WTC11 (cell line): ENCODE measurements at regions of chr16 and their contacts with region 1.

Region 1: DNA sequence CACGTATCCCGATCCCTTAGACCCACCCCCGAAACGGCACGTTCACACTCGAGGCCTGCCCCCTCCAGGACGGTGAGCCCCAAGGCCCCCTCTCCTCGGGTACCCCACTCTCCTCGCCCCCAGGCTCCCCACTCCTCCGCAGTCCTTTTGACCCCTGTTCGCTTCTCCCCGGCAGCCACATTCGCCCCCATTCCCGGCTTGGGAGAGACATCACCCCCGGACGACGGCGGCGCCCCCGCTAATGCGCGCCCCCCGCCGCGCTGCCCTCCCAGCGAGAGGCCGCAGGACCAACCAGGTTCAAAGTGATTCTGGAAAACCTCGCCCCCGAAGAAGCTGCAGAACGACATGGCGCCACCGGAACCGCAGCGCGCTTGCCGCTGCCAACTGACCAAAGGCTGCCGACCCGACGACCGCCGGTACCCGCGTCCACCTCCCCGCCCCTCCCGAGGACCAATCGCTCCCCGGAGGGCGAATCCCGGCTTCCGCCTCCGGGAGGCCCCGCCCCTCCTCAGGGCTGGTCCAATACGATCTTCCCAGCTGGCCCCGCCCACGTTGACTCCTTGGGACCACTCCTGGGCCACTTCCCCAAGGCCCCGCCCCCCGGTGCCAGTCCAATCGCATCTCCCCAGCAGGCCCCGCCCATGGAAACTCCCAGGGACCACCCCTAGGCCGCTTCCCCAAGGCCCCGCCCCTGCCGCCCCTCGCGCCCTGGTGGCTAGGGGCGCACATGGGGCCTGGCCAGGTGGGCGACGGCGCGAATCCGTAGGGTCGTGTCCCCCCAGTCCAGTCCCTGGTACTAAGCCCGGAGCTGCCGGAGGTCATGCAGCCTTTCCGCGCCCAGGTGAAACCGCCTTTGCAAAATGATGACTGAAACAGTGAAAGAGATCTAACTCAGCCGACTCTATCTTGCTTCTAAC is at the start of gene MSRB1:
- DNase-seq: peak; percentile 100
- ATAC-seq: peak; percentile 97
- H3K4me3 Mint-ChIP-seq: peak within 1 kb of the TSS; percentile 87
- H3K27ac Mint-ChIP-seq: peak within 1 kb of the TSS; percentile 60
- H3K4me1 Mint-ChIP-seq: peaks cover 22% of the 10 kb centered on the region
- H3K27me3 Mint-ChIP-seq: peaks cover 16% of the 10 kb centered on the region
- CTCF ChIP-seq: no peak
- total RNA-seq, gene MSRB1: 26.4 to 29.8 TPM (median 28.3 TPM) in 3 replicates

Region 2: DNA sequence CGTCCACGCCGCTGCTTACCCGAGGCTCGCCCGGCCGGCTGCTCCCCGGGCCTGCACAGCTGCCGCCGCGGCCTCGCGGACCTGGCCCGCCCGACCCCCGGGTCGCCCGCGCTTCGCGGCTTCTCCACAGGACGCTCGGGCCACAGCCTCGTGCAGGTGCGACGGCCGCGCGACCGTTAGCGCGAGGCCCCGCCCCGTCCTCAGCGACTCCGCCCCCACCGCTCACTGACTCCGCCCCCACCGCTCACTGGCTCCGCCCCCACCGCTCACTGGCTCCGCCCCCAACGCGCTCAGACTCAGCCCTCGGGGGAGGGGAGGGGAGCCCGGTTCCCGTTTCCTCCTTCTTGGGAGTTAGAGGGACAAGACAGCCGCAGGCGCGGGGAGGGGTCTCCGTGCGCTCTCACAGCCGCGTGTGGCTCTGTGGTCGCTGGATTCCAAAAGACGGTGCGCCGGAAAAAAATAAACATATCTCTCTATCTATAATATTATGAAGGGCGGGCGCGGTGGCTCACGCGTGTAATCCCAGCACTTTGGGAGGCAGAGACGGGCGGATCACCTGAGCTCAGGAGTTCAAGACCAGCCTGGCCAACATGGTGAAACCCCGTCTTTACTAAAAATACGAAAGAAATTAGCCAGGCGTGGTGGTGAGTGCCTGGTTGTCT is 71.0 kb before region 1 on chr16 and contains the start of gene MEIOB:
- CTCF ChIA-PET with region 1: interaction called, 10 read pairs
- POLR2A ChIA-PET with region 1: interaction called, 7 read pairs
- DNase-seq: peak; percentile 88
- ATAC-seq: peak; percentile 99
- H3K4me3 Mint-ChIP-seq: peak within 1 kb of the TSS; percentile 85
- H3K27ac Mint-ChIP-seq: no peak within 1 kb of the TSS
- H3K4me1 Mint-ChIP-seq: no peaks in the 10 kb centered on the region; the same call in 1 of the 2 replicates
- H3K27me3 Mint-ChIP-seq: peaks cover 35% of the 10 kb centered on the region
- CTCF ChIP-seq: no peak
- total RNA-seq, gene MEIOB: 1.4 to 3.9 TPM (median 3.3 TPM) in 3 replicates

Region 3: GRCh38 chr16:1964506-1965395 is 21.7 kb after region 1 on chr16 and contains the start of gene RPS2:
- CTCF ChIA-PET with region 1: interaction called, 6 read pairs
- POLR2A ChIA-PET with region 1: interaction called, 19 read pairs
- DNase-seq: peak; percentile 99
- ATAC-seq: peak; percentile 51
- H3K4me3 Mint-ChIP-seq: peak within 1 kb of the TSS; percentile 94
- H3K27ac Mint-ChIP-seq: peak within 1 kb of the TSS; percentile 97
- H3K4me1 Mint-ChIP-seq: peaks cover 39% of the 10 kb centered on the region
- H3K27me3 Mint-ChIP-seq: no peaks in the 10 kb centered on the region
- CTCF ChIP-seq: no peak
- total RNA-seq, gene RPS2: 4,395 to 4,767 TPM (median 4,632 TPM) in 3 replicates

Region 4: DNA sequence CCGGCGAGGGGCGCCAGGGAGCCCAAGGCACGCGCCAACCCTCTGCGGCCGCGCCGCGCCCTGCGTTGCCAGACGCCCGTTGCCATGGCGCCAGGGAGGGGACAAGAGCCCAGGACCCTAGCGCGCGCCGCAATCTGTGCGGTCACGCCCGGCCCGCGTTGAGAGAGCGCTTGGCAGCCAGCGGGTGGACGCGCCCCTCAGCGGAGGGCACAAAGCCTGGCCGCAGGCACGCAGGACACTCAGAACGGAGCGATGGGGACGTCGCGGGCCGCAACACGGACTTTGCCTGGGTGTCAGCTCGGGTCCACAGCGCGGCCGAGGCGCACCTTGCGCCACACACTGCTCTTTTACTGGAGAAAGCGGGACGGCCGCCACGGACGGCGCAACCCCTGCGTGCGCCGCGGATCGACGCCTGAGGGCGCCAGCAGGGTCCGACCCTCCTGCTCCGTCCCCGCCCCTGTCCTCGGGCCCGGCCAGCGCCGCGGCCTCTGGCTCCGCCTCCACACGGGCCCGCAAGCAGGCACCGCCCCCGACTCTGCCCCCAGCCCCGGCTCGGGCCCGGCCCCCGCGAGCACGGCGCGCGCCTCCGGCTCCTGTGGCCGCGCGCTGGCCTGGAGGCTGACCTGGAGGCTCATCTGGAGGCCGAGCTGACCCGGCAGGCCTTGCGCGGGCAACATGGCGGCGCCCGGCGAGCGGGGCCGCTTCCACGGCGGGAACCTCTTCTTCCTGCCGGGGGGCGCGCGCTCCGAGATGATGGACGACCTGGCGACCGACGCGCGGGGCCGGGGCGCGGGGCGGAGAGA is 40.7 kb after region 1 on chr16 and contains the start of gene GFER:
- CTCF ChIA-PET with region 1: interaction called, 10 read pairs
- POLR2A ChIA-PET with region 1: interaction called, 5 read pairs
- DNase-seq: peak; percentile 95
- ATAC-seq: peak; percentile 78
- H3K4me3 Mint-ChIP-seq: peak within 1 kb of the TSS; percentile 81
- H3K27ac Mint-ChIP-seq: peak within 1 kb of the TSS; percentile 80
- H3K4me1 Mint-ChIP-seq: peaks cover 30% of the 10 kb centered on the region
- H3K27me3 Mint-ChIP-seq: peaks cover 42% of the 10 kb centered on the region
- CTCF ChIP-seq: no peak
- total RNA-seq, gene GFER: 56.0 to 58.5 TPM (median 57.0 TPM) in 3 replicates